ENCODE measurements at regions of chr2 and their contacts with region 1.

Region 1: GRCh38 chr2:110812726-110813645 is 80.6 kb downstream of the ACOXL start:
- DNase-seq: no peak
- ATAC-seq: no peak
- H3K4me3 ChIP-seq: no peak overlapping the region
- H3K27ac ChIP-seq: peak overlapping the region; percentile 44
- H3K4me1 ChIP-seq: peaks cover 22% of the 10 kb centered on the region
- H3K27me3 ChIP-seq: no peaks in the 10 kb centered on the region
- CTCF ChIP-seq: no peak

Region 2: DNA sequence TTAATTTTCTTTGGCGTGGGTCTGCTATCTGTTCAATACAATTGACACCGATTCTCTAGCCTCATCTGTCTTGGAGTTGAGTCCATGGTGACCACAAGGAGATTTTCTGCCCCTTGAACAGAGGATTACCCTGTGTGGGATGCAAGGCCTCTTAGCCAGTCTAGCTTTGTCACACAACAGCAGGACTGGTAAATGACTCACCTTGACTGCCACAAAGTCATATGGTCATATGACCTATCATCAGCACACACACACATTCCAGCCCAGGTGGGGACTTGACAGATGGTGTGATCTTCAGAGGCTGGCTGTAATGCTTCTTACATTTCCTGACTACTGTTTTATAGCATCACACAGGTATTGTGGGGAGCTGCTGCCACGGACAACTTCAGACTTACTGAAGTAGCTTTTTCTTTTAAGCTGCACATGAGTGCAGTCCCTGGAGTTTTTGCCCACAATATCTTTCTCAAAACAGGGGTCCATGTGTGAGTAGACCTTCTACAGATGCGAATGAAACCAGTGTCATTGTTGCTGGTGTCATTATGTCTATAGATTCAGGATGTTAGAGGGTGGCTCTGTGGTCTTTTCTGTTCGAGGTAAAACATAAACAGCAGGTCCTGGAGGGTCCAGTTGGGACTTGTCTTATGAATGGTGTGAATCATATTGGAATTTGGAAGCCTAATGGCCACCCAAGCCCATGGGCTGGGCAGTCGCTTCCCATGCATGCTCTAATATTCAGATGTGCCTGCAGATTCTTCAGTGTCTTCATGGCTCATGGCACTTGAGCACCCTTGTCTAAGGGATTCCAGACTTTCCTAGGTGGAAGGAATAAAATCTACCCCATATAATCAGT is 99.2 kb before region 1 on chr2:
- intact Hi-C with region 1: no loop called
- DNase-seq: no peak
- ATAC-seq: no peak
- H3K4me3 ChIP-seq: no peak overlapping the region
- H3K27ac ChIP-seq: no peak overlapping the region
- H3K4me1 ChIP-seq: no peaks in the 10 kb centered on the region
- H3K27me3 ChIP-seq: no peaks in the 10 kb centered on the region
- CTCF ChIP-seq: no peak

Region 3: DNA sequence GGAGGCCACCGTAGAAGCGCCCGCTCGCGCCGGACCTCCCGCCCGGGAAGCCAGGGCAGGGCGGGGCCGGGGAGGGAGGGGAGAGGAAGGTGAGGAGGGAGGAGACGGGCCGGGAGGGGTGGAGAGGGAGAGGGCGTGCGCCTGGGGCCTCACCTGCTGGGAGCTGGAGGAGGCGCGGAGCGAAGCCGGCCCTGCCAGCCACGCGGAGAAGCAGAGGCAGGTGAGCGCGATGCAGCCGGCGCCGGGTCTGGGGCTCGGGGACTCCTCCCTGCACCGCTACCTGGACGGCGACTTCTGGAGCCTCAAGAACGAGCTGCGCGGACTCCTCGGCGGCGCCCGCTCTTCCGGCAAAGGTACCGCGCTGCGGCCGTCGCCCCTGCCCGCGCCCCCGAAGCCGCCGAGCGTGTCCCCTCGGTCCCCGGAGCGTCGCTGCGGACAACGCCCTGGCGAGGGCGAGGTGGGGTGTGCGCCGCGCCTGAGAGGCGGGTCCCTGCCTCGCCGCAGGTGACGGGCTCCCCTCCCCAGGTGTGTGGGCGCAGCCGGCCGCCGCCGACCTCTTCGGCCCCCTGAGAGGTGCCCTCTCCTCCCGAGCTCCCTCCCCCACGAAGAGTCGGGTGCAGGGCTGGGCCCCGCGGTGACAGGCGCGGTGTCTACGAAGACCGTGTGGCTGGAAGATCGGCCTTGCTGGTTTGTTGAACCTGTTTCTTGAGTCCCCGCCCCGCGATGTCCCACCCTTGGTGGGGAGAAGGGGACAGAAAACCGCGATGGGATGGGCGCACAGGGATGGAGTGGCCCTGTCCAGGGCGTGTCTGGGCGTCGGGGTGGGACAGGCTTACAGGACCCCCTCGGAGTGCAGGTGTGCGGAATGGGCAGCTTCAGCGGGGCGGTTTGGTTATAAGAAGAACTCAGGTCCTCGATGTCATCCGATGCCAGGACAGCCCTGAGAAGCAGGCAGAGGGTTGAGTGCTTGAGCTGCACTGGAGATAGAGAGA is 80.3 kb before region 1 on chr2 and contains the start of gene ACOXL:
- intact Hi-C with region 1: no loop called
- DNase-seq: no peak
- ATAC-seq: peak in 2 of 4 donors; percentile 27 to 32
- H3K4me3 ChIP-seq: peak within 1 kb of the TSS; percentile 45
- H3K27ac ChIP-seq: no peak within 1 kb of the TSS
- H3K4me1 ChIP-seq: peaks cover 5% of the 10 kb centered on the region
- H3K27me3 ChIP-seq: peaks cover 0 to 64% (median 17%) of the 10 kb centered on the region in 3 donors
- CTCF ChIP-seq: no peak
- total RNA-seq, gene ACOXL: not detected

Region 4: GRCh38 chr2:110854355-110855081 is 41.5 kb after region 1 on chr2:
- intact Hi-C with region 1: loop called in 1 of 2 experiments (anchors 2 kb)
- DNase-seq: no peak
- ATAC-seq: peak in 1 of 4 donors; percentile 41
- H3K4me3 ChIP-seq: no peak overlapping the region
- H3K27ac ChIP-seq: no peak overlapping the region
- H3K4me1 ChIP-seq: no peaks in the 10 kb centered on the region
- H3K27me3 ChIP-seq: peaks cover 0 to 12% (median 0%) of the 10 kb centered on the region in 3 donors
- CTCF ChIP-seq: no peak

Measured in psoas muscle (tissue), 8 donors.